Esophagus muscularis mucosa (tissue), 4 donors: ENCODE measurements at regions of chr9 and their contacts with region 1.

Region 1: GRCh38 chr9:127199001-127199791 is 65.4 kb upstream of the GARNL3 start:
- DNase-seq: peak; percentile 95
- H3K4me3 ChIP-seq: no peak overlapping the region
- H3K27ac ChIP-seq: peak overlapping the region; percentile 61 to 75 (median 71)
- H3K4me1 ChIP-seq: peaks cover 28 to 65% (median 54%) of the 10 kb centered on the region in 4 donors
- H3K27me3 ChIP-seq: no peaks in the 10 kb centered on the region
- CTCF ChIP-seq: peak; percentile 91 to 97 (median 93)
- EP300 ChIP-seq: no peak
- POLR2A ChIP-seq: no peak

Region 2: GRCh38 chr9:126939821-126940221 is 259.4 kb before region 1 on chr9:
- intact Hi-C with region 1: loop called (anchors 1 kb)
- DNase-seq: no peak
- H3K4me3 ChIP-seq: no peak overlapping the region
- H3K27ac ChIP-seq: no peak overlapping the region
- H3K4me1 ChIP-seq: peaks cover 3 to 25% (median 15%) of the 10 kb centered on the region in 4 donors
- H3K27me3 ChIP-seq: no peaks in the 10 kb centered on the region
- CTCF ChIP-seq: no peak
- EP300 ChIP-seq: no peak
- POLR2A ChIP-seq: no peak

Region 3: GRCh38 chr9:127021664-127022363 is 177.4 kb before region 1 on chr9:
- intact Hi-C with region 1: loop called (anchors 5 kb)
- DNase-seq: peak; percentile 95
- H3K4me3 ChIP-seq: no peak overlapping the region
- H3K27ac ChIP-seq: peak overlapping the region; percentile 68 to 76 (median 74)
- H3K4me1 ChIP-seq: peaks cover 29 to 38% (median 32%) of the 10 kb centered on the region in 4 donors
- H3K27me3 ChIP-seq: no peaks in the 10 kb centered on the region
- CTCF ChIP-seq: no peak
- EP300 ChIP-seq: peak; percentile 56
- POLR2A ChIP-seq: no peak

Region 4: DNA sequence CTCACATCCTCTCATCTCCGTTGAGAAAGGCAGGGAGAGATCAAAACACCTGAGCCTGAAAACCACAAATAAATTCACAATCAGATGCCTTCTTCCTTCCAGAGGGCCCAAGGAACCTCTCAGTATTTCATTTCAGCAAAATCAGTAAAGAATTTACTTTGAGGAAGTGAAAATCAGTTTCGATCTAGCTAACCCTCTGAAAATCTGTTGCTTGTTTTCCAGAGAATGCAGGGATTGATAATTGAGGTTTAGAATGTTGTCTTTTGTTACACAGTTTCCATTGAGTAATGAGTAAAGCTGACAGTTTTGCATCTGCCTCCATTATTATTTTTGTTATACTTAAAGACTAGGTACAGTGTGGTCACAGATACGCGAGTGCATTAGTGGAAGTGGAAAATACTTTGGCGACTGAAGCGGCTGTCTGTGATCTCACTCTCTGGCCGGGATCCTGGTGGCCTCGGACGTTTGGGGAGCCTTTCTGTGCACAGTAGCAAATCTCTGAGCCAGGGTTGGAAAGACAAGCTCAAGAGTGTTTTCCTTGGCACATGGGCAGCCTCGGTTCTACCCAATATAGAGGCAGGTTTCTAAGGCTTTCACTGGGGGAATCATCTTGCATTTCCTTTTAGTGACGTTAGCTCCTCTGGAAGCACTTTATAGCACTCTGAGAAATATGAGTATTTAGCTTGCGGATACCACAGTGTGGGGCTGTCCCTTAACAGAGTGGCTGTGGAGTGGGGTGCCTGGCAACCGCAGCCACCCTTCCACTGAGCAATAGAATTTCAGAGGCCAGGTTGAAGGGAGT is 44.6 kb before region 1 on chr9:
- intact Hi-C with region 1: loop called (anchors 2 kb)
- DNase-seq: peak; percentile 93
- H3K4me3 ChIP-seq: peak overlapping the region; percentile 27 to 33 (median 30)
- H3K27ac ChIP-seq: peak overlapping the region; percentile 60 to 77 (median 64)
- H3K4me1 ChIP-seq: peaks cover 24 to 37% (median 30%) of the 10 kb centered on the region in 4 donors
- H3K27me3 ChIP-seq: no peaks in the 10 kb centered on the region
- CTCF ChIP-seq: no peak
- EP300 ChIP-seq: no peak
- POLR2A ChIP-seq: no peak

Region 5: DNA sequence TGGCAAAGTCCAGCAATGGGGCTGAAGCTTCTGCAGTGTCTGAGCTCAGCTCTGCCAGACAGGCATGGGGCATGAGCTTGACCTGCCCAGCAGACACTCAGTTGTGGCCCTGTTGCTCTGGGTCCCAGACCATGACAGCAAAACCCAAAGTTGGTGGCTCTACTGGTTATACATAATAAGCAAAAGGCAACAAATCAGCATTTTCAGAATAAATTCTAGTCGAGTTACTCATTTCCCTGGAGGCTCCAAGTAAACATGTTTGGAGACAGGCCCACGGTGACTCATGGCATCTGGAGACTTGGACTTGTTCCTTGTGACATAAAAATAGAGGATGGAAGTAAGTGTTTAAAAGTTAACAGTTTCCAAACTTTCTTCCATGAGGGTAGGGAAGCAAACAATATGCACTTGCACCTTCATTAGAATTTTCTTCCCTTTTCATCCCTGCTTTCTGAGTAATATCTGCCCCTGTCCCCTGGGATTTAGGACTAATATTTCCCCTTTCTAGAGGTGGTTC is 137.6 kb after region 1 on chr9:
- intact Hi-C with region 1: no loop called
- DNase-seq: peak; percentile 96
- H3K4me3 ChIP-seq: no peak overlapping the region
- H3K27ac ChIP-seq: peak overlapping the region; percentile 53 to 76 (median 72)
- H3K4me1 ChIP-seq: peaks cover 37 to 73% (median 55%) of the 10 kb centered on the region in 4 donors
- H3K27me3 ChIP-seq: no peaks in the 10 kb centered on the region
- CTCF ChIP-seq: no peak
- EP300 ChIP-seq: no peak
- POLR2A ChIP-seq: no peak